Activated T-helper 1 cell treated with anti-CD3 and anti-CD28 coated beads, Interleukin-12 subunit alpha, Interleukin-12 subunit beta, Interleukin-2, Interleukin-4 antibody, amounts not matched to agents 30 ng/mL and 10 ng/mL and 1 ng/mL, durations not matched to agents 14 hours and 24 hours and 36 hours (primary cell): ENCODE measurements at regions of chr2 and their contacts with region 1.

Region 1: GRCh38 chr2:241637000-241637791 is at the starts of genes ATG4B and THAP4:
- DNase-seq: peak; percentile 78
- H3K4me3 Mint-ChIP-seq: peak within 1 kb of the TSS; percentile 93
- H3K27ac Mint-ChIP-seq: peak within 1 kb of the TSS; percentile 93
- H3K4me1 Mint-ChIP-seq: peaks cover 44% of the 10 kb centered on the region
- H3K27me3 Mint-ChIP-seq: no peaks in the 10 kb centered on the region
- total RNA-seq, gene ATG4B: 116 and 126 TPM in 2 replicates
- total RNA-seq, gene THAP4: 53.1 and 58.5 TPM in 2 replicates

Region 2: DNA sequence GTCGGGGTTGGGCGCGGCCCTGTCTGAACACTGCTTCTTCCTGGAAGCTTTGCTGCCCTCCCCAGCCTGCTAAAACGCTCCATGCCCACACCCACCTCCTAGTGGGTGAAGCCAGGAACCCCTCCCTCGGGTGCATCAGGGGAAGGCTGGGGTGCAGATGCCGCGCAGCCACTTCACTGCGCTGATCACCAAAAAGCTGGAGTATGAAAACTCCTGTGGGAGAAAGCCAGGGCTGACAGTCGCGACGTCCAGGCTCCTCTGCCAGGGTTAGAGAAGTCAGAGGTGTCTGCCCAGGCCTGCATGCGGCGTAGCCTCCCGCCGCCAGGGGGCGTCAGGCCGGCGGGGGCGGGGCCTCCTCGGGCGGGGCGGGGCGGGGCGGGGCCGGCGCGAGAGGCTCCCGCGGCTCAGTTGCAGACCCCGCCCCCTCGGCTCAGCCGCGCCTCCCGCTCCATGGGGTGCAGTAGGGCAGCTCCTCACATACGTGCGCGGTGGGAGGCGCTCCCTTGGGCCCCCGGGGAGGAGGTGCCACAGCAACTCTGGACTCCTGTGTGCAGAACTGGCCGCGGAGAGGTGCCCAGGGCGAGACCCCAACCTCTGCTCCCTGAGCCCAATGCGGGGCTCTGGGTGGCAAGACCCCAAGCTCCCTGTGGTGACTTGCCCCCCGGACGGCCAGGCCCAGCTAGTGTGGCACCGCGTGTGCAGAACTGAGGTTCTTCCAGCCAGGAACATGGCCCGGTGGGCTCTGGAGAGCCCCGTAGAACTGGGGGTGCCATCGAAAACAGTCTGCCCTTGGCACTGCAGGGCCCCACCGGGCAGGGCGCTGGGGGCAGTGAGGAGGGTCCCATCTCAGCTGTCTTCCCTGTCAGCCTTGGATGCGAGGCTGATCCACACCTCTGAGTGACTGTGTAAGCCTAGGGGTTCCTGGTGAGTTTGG is 1070.7 kb before region 1 on chr2:
- intact Hi-C with region 1: loop called (anchors 5 kb)
- DNase-seq: peak; percentile 93
- H3K4me3 Mint-ChIP-seq: peak overlapping the region; percentile 93
- H3K27ac Mint-ChIP-seq: peak overlapping the region; percentile 99
- H3K4me1 Mint-ChIP-seq: peaks cover 83% of the 10 kb centered on the region
- H3K27me3 Mint-ChIP-seq: no peaks in the 10 kb centered on the region

Region 3: GRCh38 chr2:241443486-241444223 is 193.5 kb before region 1 on chr2:
- intact Hi-C with region 1: loop called (anchors 1 kb)
- DNase-seq: peak; percentile 83
- H3K4me3 Mint-ChIP-seq: peak overlapping the region; percentile 55
- H3K27ac Mint-ChIP-seq: peak overlapping the region; percentile 93
- H3K4me1 Mint-ChIP-seq: peaks cover 32% of the 10 kb centered on the region
- H3K27me3 Mint-ChIP-seq: peaks cover 30% of the 10 kb centered on the region

Region 4: DNA sequence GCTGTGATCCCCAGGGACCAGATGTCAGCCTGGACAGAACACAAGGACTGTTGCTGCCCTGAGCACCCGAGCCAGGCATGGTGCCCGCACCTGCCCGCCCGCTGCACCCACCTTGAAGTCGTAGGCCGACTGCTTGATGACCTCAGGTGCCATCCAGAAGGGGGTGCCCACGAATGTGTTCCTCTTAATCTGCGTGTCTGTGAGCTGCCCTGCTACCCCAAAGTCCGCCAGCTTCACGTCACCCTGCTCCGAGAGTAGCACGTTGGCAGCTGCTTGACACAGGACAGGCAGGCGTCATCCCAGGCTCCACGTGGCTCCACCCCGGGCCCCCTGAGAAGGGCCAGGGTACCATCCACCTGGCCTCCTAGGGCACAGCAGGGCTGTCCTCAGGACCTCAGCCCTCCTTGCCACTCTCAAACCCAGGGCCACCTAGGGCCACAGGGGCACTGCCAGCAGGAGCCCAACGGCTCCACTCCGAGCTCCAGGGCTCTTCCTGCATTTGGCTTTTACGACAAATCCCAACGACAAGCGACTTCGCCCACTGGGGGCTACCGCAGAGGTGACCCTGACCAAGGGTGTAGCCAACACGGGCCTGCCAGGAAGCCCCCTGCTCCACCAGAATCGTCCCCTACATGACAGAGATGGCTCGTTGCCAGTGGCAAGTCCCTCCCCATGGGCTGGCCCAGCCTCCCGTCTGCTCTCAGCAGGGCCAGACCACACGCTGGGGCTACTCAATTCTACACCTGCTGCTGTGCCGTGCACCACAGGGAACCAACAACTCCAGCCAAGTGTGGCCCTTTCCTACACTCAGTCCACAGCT is 137.8 kb before region 1 on chr2:
- intact Hi-C with region 1: no loop called
- DNase-seq: no peak
- H3K4me3 Mint-ChIP-seq: no peak overlapping the region
- H3K27ac Mint-ChIP-seq: no peak overlapping the region
- H3K4me1 Mint-ChIP-seq: no peaks in the 10 kb centered on the region
- H3K27me3 Mint-ChIP-seq: no peaks in the 10 kb centered on the region

Region 5: DNA sequence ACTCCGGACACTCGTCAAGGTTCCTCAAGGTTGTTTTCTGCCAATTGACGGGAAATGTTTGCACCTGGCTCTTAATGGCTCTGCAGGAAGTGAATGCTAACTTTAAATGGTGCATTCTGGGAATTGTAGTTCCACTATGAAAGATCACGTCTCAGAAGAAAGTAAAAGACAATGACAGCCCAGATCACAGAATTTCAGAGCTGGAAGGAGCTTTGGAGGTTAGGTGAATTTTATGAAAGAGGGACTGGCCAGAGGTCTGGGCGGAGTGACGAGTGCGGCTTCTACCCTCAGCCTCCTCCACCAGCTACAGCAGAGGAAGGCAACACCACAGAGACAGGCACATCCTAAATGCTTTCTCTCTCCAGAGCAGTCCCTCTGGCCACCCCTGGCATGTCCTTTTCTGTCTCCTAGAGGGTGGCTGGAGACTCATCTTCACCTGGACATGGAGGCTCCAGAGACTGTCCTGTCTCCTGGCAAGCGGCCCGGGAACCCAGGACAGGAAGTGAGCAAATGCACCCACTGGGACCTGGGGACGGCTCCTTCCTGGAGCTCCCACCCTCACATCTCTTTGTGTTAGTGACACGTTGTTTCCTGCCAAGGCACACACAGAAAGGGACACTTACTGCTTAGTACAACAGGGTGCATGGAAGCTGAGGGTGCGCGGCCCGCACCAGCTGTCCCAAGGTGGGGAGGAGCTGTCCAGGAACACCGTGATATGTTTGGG is 19.6 kb before region 1 on chr2:
- intact Hi-C with region 1: loop called (anchors 1 kb)
- DNase-seq: peak; percentile 31
- H3K4me3 Mint-ChIP-seq: peak overlapping the region; percentile 85
- H3K27ac Mint-ChIP-seq: peak overlapping the region; percentile 88
- H3K4me1 Mint-ChIP-seq: peaks cover 36% of the 10 kb centered on the region
- H3K27me3 Mint-ChIP-seq: no peaks in the 10 kb centered on the region

Region 6: DNA sequence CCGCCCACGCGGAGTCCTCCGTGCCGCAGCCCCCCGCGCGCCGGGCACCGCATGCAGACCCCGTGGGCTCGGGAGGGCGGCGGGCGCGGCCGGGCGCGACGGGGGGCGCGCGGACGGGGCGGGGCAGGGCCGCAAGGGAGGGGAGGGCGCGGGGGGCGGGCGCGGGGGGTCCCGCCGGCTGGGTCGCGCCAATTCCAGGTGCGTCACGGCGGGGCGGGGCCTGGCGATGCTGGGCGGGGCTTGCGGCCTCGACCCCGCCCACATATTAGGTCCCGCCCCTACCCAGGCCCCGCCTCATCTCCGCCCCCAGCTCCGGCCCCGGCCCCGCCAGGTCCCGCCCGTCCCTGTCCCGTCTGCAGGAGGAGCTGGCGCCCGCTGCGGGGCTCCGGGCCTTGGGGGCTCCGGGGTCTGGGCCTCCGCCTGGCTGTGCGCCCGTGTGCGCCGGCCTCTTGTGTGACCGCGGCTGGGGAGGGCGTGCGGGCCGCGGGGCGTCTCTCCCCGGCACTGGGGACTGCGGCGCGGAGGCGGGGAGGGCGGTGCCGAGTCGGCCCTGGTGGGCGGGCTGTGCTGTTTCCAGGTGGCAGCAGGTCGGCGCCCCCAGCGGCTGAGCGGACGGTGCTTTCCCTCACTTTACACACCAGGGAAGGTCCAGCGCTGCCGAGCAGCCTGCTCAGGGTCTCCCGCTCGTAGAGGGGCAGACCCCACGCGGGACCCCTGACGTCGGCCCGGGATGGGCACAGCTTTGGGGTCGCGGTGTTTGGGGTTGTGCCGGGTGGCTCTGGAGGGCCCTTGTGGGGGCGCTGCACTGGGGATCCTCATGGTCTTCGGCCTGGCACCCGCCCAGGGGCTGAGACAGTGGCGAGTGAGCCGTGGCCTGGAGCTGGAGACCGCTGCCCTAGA is 65.2 kb after region 1 on chr2:
- intact Hi-C with region 1: loop called (anchors 1 kb)
- DNase-seq: peak; percentile 82
- H3K4me3 Mint-ChIP-seq: peak overlapping the region; percentile 78
- H3K27ac Mint-ChIP-seq: peak overlapping the region; percentile 53
- H3K4me1 Mint-ChIP-seq: peaks cover 20% of the 10 kb centered on the region
- H3K27me3 Mint-ChIP-seq: no peaks in the 10 kb centered on the region

Region 7: GRCh38 chr2:241803387-241804325 is 166.5 kb after region 1 on chr2:
- intact Hi-C with region 1: no loop called
- DNase-seq: peak; percentile 33
- H3K4me3 Mint-ChIP-seq: peak overlapping the region; percentile 56
- H3K27ac Mint-ChIP-seq: peak overlapping the region; percentile 29
- H3K4me1 Mint-ChIP-seq: peaks cover 4% of the 10 kb centered on the region
- H3K27me3 Mint-ChIP-seq: peaks cover 9% of the 10 kb centered on the region